Gastrocnemius medialis (tissue), 4 donors: ENCODE measurements at regions of chr20 and their contacts with region 1.

Region 1: DNA sequence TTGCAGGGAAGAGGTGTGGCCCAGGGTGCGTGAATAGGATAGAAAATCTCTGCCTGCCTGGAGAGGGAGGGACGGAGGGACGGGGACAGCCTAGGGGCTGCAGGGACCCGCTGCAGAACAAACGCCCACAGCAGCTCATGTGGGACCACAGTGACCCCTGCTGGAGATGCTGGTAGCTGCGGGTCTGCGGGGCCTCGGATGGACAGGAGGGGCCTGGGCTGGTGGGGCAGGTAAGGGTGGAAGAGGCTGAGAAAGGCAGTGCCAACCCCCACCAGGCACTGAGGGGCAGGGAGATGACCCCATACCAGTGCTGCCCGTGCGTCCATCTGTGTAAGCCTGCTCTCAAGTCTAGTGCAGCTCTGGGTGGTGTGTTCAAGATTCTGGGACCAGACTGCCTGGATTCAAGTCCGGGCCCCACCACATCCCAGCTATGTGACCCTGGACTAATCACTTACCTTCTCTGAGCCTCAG is 39.4 kb downstream of the KIAA1755 start:
- DNase-seq: peak in 1 of 2 donors; percentile 30
- ATAC-seq: peak; percentile 40 to 60
- H3K4me3 ChIP-seq: no peak overlapping the region
- H3K27ac ChIP-seq: no peak overlapping the region
- H3K4me1 ChIP-seq: no peaks in the 10 kb centered on the region
- H3K27me3 ChIP-seq: no peaks in the 10 kb centered on the region
- CTCF ChIP-seq: peak; percentile 61 to 90 (median 85)
- POLR2A ChIP-seq: no peak

Region 2: DNA sequence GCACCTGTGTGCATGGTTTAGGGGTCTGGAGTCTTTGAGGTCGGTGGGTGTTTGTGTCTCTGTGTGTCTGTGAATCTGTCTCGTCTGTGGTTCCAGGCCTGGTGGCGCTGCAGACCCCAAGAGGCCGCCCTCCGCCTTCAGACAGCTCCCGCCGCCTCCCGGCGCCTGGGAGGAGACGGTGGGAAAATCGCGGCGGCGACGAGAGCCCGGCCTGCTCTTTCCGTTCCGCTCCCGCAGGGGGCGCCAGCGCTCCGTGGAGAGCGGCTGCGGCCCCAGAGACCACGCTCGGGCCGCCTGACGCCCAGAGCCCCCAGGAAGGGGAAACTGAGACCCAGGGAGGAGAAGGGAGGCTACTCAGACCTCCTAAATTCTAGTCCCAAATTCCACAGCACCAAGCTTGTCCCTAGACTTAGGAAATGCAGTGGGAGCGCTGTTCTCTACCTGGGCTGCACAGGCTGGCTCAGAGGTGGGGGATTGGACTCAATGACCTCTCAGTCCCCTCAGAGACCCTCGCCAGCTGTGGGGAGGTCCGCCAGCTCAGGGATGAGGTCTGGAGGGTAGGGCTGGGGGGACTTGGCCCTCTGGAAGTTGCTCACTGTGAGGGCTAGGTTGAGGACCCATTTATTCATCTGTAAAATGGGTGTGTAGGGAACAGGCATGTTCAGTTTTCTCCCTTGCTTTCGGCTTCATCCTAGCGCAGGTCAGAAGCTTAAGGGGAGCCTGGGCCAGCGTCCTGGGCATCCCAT is 656.6 kb before region 1 on chr20:
- in situ Hi-C with region 1: loop called in 3 of 4 experiments (anchors 25 kb)
- intact Hi-C with region 1: loop called (anchors 2 kb)
- DNase-seq: no peak
- ATAC-seq: peak in 1 of 2 donors; percentile 78
- H3K4me3 ChIP-seq: peak overlapping the region in 1 of 4 donors; percentile 28
- H3K27ac ChIP-seq: no peak overlapping the region
- H3K4me1 ChIP-seq: peaks cover 0 to 10% of the 10 kb centered on the region in 2 donors
- H3K27me3 ChIP-seq: peaks cover 16 to 23% (median 16%) of the 10 kb centered on the region in 3 donors
- CTCF ChIP-seq: peak; percentile 78 to 91 (median 87)
- POLR2A ChIP-seq: no peak

Region 3: DNA sequence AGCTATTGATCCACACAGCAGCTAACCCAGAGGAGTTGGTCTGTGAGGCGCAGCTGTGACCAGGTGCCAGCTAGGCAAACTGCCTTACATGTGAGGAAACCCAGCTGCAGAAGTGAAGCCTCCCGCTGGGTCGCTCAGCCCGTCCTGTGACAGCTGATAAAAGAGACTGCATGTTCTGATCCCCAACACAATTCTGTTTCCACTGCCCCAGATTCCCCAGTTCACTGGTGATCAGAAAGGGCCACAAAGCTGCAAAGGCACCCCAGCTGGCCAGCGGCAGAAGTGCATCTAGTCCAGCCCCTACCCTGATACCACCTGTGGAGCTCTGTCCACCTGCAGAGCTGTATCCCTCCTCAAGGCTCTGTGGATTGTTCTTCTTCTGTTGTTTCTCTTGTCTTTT is 462.8 kb before region 1 on chr20:
- in situ Hi-C with region 1: no loop called
- intact Hi-C with region 1: loop called (anchors 5 kb)
- DNase-seq: no peak
- ATAC-seq: no peak
- H3K4me3 ChIP-seq: no peak overlapping the region
- H3K27ac ChIP-seq: no peak overlapping the region
- H3K4me1 ChIP-seq: peaks cover 5 to 10% of the 10 kb centered on the region in 2 donors
- H3K27me3 ChIP-seq: no peaks in the 10 kb centered on the region
- CTCF ChIP-seq: no peak
- POLR2A ChIP-seq: no peak

Region 4: GRCh38 chr20:37901654-37902503 is 319.3 kb before region 1 on chr20:
- in situ Hi-C with region 1: no loop called
- intact Hi-C with region 1: loop called (anchors 5 kb)
- DNase-seq: peak; percentile 17 to 45
- ATAC-seq: peak; percentile 66 to 75
- H3K4me3 ChIP-seq: peak overlapping the region in 1 of 4 donors; percentile 46
- H3K27ac ChIP-seq: no peak overlapping the region
- H3K4me1 ChIP-seq: peaks cover 0 to 6% of the 10 kb centered on the region in 2 donors
- H3K27me3 ChIP-seq: peaks cover 38 to 61% (median 44%) of the 10 kb centered on the region in 3 donors
- CTCF ChIP-seq: peak in 4 of 5 experiments; percentile 25 to 68 (median 38)
- POLR2A ChIP-seq: no peak

Region 5: GRCh38 chr20:38049800-38050199 is 171.4 kb before region 1 on chr20:
- in situ Hi-C with region 1: loop called in 2 of 4 experiments (anchors 5 to 10 kb)
- intact Hi-C with region 1: no loop called
- DNase-seq: no peak
- ATAC-seq: peak; percentile 51 to 90
- H3K4me3 ChIP-seq: no peak overlapping the region
- H3K27ac ChIP-seq: peak overlapping the region; percentile 69 to 86 (median 77)
- H3K4me1 ChIP-seq: peaks cover 57 to 62% of the 10 kb centered on the region in 2 donors
- H3K27me3 ChIP-seq: no peaks in the 10 kb centered on the region
- CTCF ChIP-seq: no peak
- POLR2A ChIP-seq: no peak

Region 6: GRCh38 chr20:38057351-38057972 is 163.7 kb before region 1 on chr20:
- in situ Hi-C with region 1: loop called in 3 of 4 experiments (anchors 5 to 10 kb)
- intact Hi-C with region 1: loop called (anchors 1 kb)
- DNase-seq: peak; percentile 59 to 73
- ATAC-seq: peak; percentile 67 to 90
- H3K4me3 ChIP-seq: no peak overlapping the region
- H3K27ac ChIP-seq: peak overlapping the region in 3 of 4 donors; percentile 8 to 42 (median 14)
- H3K4me1 ChIP-seq: peaks cover 26 to 28% of the 10 kb centered on the region in 2 donors
- H3K27me3 ChIP-seq: no peaks in the 10 kb centered on the region
- CTCF ChIP-seq: peak; percentile 85 to 94 (median 88)
- POLR2A ChIP-seq: no peak

Region 7: DNA sequence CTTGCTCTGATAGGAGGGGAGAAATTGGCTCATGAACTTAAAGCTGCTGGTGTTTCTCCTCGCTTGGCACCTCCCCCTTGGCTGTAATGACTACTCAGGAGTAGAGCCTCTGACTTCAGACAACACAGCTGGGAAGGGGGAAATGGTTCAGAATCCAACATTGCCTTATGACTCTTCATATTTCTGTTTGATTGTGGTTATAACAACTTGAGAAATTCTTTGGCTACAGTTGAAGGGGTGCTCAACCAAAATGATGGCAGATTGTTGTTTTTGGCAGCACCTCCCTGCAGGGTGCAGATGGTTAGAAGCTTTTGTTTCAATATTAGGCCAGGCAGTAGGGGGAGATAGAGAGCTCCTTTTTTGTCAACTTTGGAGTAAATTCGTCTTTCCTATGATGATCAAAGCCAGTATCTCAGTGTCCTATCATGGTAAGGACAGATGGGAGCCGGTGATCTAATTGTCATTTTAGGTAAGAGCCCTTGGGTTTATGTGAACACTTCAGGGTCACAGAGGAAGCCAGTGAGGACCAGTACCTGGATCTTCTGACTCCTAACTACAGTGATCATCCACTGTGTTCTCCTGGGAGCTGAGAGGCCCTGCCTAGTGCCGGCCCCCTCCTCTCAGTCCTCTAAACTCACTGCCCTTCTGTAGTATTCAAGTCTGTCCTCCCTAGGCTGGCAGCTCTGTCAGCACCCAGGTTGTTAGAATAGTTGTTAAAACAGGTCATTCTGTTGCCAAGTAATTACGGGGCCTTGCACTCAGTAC is 147.7 kb before region 1 on chr20:
- in situ Hi-C with region 1: no loop called
- intact Hi-C with region 1: loop called (anchors 5 kb)
- DNase-seq: peak; percentile 42 to 52
- ATAC-seq: peak; percentile 59 to 64
- H3K4me3 ChIP-seq: no peak overlapping the region
- H3K27ac ChIP-seq: peak overlapping the region; percentile 83 to 88 (median 86)
- H3K4me1 ChIP-seq: peaks cover 46 to 57% of the 10 kb centered on the region in 2 donors
- H3K27me3 ChIP-seq: no peaks in the 10 kb centered on the region
- CTCF ChIP-seq: peak; percentile 59 to 80 (median 74)
- POLR2A ChIP-seq: no peak